ENCODE measurements at regions of chrX and their contacts with region 1.

Region 1: GRCh38 chrX:11787564-11787963 is 29.5 kb downstream of the MSL3 start:
- DNase-seq: peak; percentile 46
- ATAC-seq: peak; percentile 65
- H3K4me3 Mint-ChIP-seq: peak overlapping the region; percentile 53
- H3K27ac Mint-ChIP-seq: no peak overlapping the region
- H3K4me1 Mint-ChIP-seq: peaks cover 27% of the 10 kb centered on the region
- H3K27me3 Mint-ChIP-seq: no peaks in the 10 kb centered on the region
- CTCF ChIP-seq: no peak

Region 2: GRCh38 chrX:11611965-11612364 is 175.6 kb before region 1 on chrX:
- CTCF ChIA-PET with region 1: no interaction called
- POLR2A ChIA-PET with region 1: no interaction called
- intact Hi-C with region 1: no loop called
- DNase-seq: no peak
- ATAC-seq: no peak
- H3K4me3 Mint-ChIP-seq: no peak overlapping the region
- H3K27ac Mint-ChIP-seq: no peak overlapping the region
- H3K4me1 Mint-ChIP-seq: peaks cover 6% of the 10 kb centered on the region
- H3K27me3 Mint-ChIP-seq: no peaks in the 10 kb centered on the region
- CTCF ChIP-seq: no peak

Region 3: GRCh38 chrX:11908371-11908770 is 120.8 kb after region 1 on chrX:
- CTCF ChIA-PET with region 1: interaction called, 7 read pairs
- POLR2A ChIA-PET with region 1: no interaction called
- intact Hi-C with region 1: loop called (anchors 1 kb)
- DNase-seq: no peak
- ATAC-seq: peak; percentile 56
- H3K4me3 Mint-ChIP-seq: no peak overlapping the region
- H3K27ac Mint-ChIP-seq: no peak overlapping the region
- H3K4me1 Mint-ChIP-seq: no peaks in the 10 kb centered on the region
- H3K27me3 Mint-ChIP-seq: no peaks in the 10 kb centered on the region
- CTCF ChIP-seq: no peak

Region 4: DNA sequence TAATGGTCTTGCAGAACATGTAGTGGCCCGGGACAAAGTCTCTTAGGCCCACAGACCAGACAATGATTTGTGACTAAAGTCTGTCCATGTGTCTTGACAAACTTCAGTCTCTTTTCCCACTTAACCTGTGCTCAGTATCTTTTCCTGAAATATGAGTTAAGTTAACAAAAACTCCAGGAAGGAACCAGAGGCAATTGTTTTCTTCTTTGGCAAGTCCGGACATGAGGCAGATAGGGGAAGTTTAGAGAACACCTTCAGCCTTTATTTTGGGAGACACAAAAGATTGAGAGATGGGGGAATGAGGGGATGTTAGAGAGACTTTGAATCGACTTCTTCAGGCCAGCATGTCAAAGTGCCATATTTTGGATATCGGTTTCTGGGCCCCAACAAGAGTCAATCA is 270.5 kb after region 1 on chrX:
- CTCF ChIA-PET with region 1: no interaction called
- POLR2A ChIA-PET with region 1: no interaction called
- intact Hi-C with region 1: loop called (anchors 10 kb)
- DNase-seq: no peak
- ATAC-seq: no peak
- H3K4me3 Mint-ChIP-seq: no peak overlapping the region
- H3K27ac Mint-ChIP-seq: no peak overlapping the region
- H3K4me1 Mint-ChIP-seq: no peaks in the 10 kb centered on the region
- H3K27me3 Mint-ChIP-seq: no peaks in the 10 kb centered on the region
- CTCF ChIP-seq: no peak

Measured in activated B cell treated with CpG ODN at 0.5 μM for 24 hours (primary cell).